Endothelial cell of umbilical vein (primary cell): ENCODE measurements at regions of chr2 and their contacts with region 1.

Region 1: GRCh38 chr2:100262555-100263320 is 59.6 kb downstream of the LONRF2 start:
- DNase-seq: peak; percentile 56
- H3K4me3 ChIP-seq: no peak overlapping the region
- H3K27ac ChIP-seq: no peak overlapping the region
- H3K4me1 ChIP-seq: no peaks in the 10 kb centered on the region
- H3K27me3 ChIP-seq: no peaks in the 10 kb centered on the region
- CTCF ChIP-seq: peak; percentile 92 to 94
- POLR2A ChIP-seq: no peak

Region 2: GRCh38 chr2:99900556-99900955 is 362.2 kb before region 1 on chr2:
- CTCF ChIA-PET with region 1: no interaction called
- POLR2A ChIA-PET with region 1: no interaction called
- dilution Hi-C with region 1: no loop called
- intact Hi-C with region 1: no loop called
- DNase-seq: no peak
- H3K4me3 ChIP-seq: no peak overlapping the region
- H3K27ac ChIP-seq: no peak overlapping the region
- H3K4me1 ChIP-seq: no peaks in the 10 kb centered on the region
- H3K27me3 ChIP-seq: peaks cover 2 to 10% of the 10 kb centered on the region in 2 experiments
- CTCF ChIP-seq: no peak
- POLR2A ChIP-seq: no peak

Region 3: DNA sequence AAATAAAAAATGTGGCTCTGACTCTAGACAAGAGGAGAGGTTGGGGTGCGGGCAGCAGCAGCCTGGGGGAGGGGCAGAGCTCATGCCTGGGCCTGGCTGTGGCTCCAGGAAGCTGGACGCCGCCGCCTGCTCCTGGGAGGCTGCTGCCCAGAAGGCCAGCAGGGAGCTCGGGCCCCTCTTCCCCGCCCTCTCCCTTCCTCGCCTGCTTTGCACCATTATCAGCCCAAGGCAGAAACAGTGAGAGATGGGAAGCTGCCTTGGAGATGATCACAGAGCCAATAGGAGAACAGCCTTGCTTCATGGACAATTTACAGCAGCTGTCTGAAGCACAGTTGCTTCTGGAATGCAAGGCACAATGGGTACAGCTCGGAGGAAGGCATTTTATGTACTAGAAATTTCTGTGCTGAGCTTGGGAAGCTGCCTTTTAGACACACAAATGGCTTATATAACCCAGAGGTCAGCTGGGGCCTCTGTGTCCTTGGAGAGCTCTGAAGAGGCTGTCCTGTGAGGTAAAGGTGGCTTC is 65.0 kb before region 1 on chr2:
- CTCF ChIA-PET with region 1: interaction called, 10 read pairs
- POLR2A ChIA-PET with region 1: no interaction called
- dilution Hi-C with region 1: no loop called
- intact Hi-C with region 1: no loop called
- DNase-seq: peak; percentile 66
- H3K4me3 ChIP-seq: no peak overlapping the region
- H3K27ac ChIP-seq: peak overlapping the region; percentile 60
- H3K4me1 ChIP-seq: peaks cover 51% of the 10 kb centered on the region
- H3K27me3 ChIP-seq: no peaks in the 10 kb centered on the region
- CTCF ChIP-seq: no peak
- POLR2A ChIP-seq: no peak

Region 4: DNA sequence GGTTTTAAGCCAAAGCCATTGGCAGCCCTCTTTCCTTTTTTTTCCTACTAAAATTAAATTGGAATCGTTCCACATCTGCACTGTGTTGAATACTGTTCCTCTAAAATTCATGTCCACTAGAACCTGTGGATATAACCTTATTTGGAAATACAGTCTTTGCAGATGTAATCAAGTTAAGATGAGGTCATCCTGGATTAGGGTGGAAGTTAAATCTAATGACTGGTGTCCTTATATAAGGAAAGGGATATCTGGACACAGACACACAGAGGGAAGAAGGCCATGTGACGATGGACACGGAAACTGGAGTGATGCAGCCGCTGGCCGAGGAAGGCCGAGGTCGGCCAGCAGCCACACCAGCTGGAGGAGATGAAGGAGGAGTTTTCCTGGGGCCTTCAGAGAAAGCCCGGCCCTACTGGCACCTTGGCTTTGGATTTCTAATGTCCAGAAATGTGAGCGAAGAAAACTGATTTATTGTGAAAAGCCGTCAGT is 10.1 kb after region 1 on chr2:
- CTCF ChIA-PET with region 1: interaction called, 52 read pairs
- POLR2A ChIA-PET with region 1: no interaction called
- dilution Hi-C with region 1: no loop called
- intact Hi-C with region 1: no loop called
- DNase-seq: no peak
- H3K4me3 ChIP-seq: no peak overlapping the region
- H3K27ac ChIP-seq: no peak overlapping the region
- H3K4me1 ChIP-seq: no peaks in the 10 kb centered on the region
- H3K27me3 ChIP-seq: peaks cover 0 to 2% of the 10 kb centered on the region in 2 experiments
- CTCF ChIP-seq: no peak
- POLR2A ChIP-seq: no peak

Region 5: GRCh38 chr2:100291120-100291970 is 28.6 kb after region 1 on chr2:
- CTCF ChIA-PET with region 1: interaction called, 52 read pairs
- POLR2A ChIA-PET with region 1: no interaction called
- dilution Hi-C with region 1: no loop called
- intact Hi-C with region 1: loop called (anchors 2 kb)
- DNase-seq: peak; percentile 77
- H3K4me3 ChIP-seq: no peak overlapping the region
- H3K27ac ChIP-seq: no peak overlapping the region
- H3K4me1 ChIP-seq: peaks cover 6% of the 10 kb centered on the region
- H3K27me3 ChIP-seq: peaks cover 4 to 7% of the 10 kb centered on the region in 2 experiments
- CTCF ChIP-seq: no peak
- POLR2A ChIP-seq: no peak

Region 6: DNA sequence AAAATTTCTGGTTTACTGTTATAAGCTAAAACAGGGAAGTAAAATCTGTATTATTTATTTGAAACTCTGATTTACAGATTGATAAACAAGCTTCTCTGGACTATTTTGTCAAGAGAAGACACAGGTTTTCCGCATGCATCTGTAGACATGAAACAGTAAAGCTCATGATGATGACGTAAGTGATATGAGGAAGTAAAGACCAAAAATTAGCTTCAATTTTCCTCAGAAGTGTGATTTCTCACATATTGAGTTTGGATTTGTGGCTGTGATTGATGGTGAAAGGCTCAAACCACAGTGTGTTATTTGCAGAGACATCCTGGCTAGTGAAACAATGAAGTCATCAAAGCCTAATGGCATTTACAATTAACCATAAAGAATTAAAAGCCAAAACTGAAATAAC is 72.2 kb after region 1 on chr2:
- CTCF ChIA-PET with region 1: interaction called, 13 read pairs
- POLR2A ChIA-PET with region 1: no interaction called
- dilution Hi-C with region 1: no loop called
- intact Hi-C with region 1: no loop called
- DNase-seq: no peak
- H3K4me3 ChIP-seq: no peak overlapping the region
- H3K27ac ChIP-seq: no peak overlapping the region
- H3K4me1 ChIP-seq: no peaks in the 10 kb centered on the region
- H3K27me3 ChIP-seq: peaks cover 2 to 7% of the 10 kb centered on the region in 2 experiments
- CTCF ChIP-seq: no peak
- POLR2A ChIP-seq: no peak

Region 7: GRCh38 chr2:100381240-100381639 is 118.5 kb after region 1 on chr2:
- CTCF ChIA-PET with region 1: interaction called, 724 read pairs
- POLR2A ChIA-PET with region 1: interaction called, 6 read pairs
- dilution Hi-C with region 1: no loop called
- intact Hi-C with region 1: loop called (anchors 1 kb)
- DNase-seq: peak; percentile 81
- H3K4me3 ChIP-seq: no peak overlapping the region
- H3K27ac ChIP-seq: no peak overlapping the region
- H3K4me1 ChIP-seq: no peaks in the 10 kb centered on the region
- H3K27me3 ChIP-seq: peaks cover 4 to 6% of the 10 kb centered on the region in 2 experiments
- CTCF ChIP-seq: peak; percentile 81 to 87
- POLR2A ChIP-seq: no peak

Region 8: GRCh38 chr2:100422320-100423055 is 159.8 kb after region 1 on chr2:
- CTCF ChIA-PET with region 1: interaction called, 12 read pairs
- POLR2A ChIA-PET with region 1: no interaction called
- dilution Hi-C with region 1: no loop called
- intact Hi-C with region 1: no loop called
- DNase-seq: peak; percentile 35
- H3K4me3 ChIP-seq: no peak overlapping the region
- H3K27ac ChIP-seq: no peak overlapping the region
- H3K4me1 ChIP-seq: no peaks in the 10 kb centered on the region
- H3K27me3 ChIP-seq: peaks cover 0 to 5% of the 10 kb centered on the region in 2 experiments
- CTCF ChIP-seq: peak; percentile 39 to 68
- POLR2A ChIP-seq: no peak